ENCODE measurements at regions of chr17 and their contacts with region 1.

Region 1: DNA sequence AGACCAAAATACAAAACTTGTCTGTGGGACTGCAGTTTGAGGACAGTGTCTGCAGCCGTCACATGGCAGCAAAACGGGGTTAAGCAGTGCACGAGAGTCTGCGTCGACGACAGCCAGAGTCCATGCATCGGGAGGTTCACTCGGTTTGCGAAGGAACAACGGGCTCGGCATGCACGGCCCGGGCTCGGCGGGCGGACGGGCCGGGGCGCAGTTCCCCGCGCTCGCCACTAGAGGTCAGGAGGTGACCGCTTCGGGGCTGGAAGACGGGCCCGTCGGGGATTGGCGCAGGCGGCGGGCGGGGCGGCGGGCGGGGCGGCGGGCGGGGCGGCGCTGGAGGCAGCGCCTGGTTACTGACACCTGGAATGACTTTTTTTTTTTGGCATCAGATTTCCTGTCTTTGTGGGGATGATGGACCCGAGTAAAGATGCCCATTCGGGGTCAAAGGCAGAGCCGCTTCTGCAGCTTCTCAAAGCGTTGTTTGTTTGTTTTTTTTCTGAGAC is 6.5 kb downstream of the SCGB1C2 start:
- DNase-seq: peak; percentile 86 to 96
- ATAC-seq: peak; percentile 91
- H3K4me3 ChIP-seq: no peak overlapping the region
- H3K27ac ChIP-seq: no peak overlapping the region
- H3K4me1 ChIP-seq: no peaks in the 10 kb centered on the region
- H3K27me3 ChIP-seq: no peaks in the 10 kb centered on the region

Region 2: DNA sequence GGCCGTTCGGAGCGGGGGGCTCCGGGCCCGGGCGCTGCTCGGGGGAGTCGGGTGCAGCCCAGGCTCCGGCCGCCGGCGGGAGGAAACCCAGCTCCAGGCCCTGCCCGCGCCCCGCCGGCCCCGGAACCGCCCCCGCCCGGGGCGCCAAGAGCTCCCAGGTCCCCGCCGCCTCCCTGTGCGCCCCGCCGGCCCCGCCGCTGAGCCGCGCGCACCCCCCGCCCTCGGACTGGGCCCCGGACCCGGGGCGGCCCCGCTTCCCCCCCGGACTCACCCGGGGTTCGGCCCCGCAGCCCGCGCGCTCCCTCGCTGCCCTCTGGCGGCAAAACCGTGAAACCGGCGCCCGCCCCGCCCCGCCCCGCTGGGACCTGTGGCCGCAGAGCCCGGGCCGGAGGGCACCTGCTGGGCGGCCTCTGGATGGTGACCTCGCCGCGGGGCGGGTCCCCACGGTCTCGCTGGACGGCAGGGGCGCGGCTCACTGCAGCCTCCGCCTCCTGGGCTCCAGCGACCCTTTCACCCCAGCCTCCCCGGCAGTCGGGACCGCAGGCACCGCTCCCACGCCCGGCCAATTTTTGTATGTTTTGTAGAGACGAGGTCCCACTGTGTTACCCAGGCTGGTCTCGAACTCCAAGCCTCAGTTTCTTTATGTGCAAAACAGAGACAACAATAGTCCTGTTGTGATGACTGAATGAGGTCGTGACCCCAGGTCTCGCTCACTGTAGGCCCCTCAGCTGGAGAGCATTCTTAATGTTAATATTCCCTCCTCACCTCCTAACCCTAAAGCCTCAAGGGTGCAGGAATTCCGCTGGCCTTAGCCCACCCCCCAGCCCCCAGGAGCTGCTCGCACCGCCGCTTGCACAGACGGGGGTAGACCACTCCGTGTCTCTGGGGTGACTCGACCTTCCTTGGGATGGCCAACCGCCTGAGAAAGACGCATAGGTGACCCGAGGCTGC is 242.4 kb after region 1 on chr17:
- intact Hi-C with region 1: loop called in 1 of 2 experiments (anchors 2 kb)
- DNase-seq: peak; percentile 84 to 94
- ATAC-seq: peak; percentile 88
- H3K4me3 ChIP-seq: peak overlapping the region; percentile 61 to 74
- H3K27ac ChIP-seq: no peak overlapping the region
- H3K4me1 ChIP-seq: no peaks in the 10 kb centered on the region
- H3K27me3 ChIP-seq: no peaks in the 10 kb centered on the region

Region 3: GRCh38 chr17:700504-701094 is 556.8 kb after region 1 on chr17:
- intact Hi-C with region 1: loop called in 1 of 2 experiments (anchors 5 kb)
- DNase-seq: no peak
- ATAC-seq: no peak
- H3K4me3 ChIP-seq: no peak overlapping the region
- H3K27ac ChIP-seq: no peak overlapping the region
- H3K4me1 ChIP-seq: no peaks in the 10 kb centered on the region
- H3K27me3 ChIP-seq: no peaks in the 10 kb centered on the region